ENCODE measurements at regions of chr3 and their contacts with region 1.

Region 1: DNA sequence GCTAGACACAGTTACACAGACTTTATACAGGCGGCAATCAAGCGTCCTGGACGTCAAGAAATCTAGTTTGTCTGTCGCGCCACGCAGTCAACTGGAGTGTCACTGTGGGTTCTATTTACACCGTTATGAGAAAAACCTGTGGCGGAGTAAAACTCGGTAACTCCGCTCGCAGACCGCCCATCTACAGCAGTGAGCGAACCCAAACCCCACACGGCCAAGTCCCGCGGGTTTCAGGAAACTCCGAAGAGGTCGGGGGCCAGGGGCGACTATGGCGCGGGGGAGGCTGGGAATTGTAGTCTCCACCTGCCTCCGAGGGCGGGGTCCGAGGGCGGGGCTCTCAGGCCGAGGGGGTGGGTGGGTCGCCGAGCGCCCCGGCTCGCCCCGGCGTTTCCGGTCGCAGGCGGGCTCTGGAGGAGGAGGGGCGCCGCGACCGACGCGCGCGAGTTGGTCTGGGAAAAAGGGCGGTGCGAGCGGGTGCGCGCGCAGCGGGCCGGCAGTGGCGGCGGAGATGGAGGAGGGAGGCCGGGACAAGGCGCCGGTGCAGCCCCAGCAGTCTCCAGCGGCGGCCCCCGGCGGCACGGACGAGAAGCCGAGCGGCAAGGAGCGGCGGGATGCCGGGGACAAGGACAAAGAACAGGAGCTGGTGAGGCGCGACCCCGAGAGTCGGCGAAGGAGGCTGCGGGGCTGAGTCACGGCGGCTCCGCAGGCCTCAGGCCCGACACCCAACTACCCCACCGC is at the start of gene PSMD2:
- H3K4me3 Mint-ChIP-seq: peak within 1 kb of the TSS; percentile 98
- H3K27ac Mint-ChIP-seq: peak within 1 kb of the TSS; percentile 91
- H3K4me1 Mint-ChIP-seq: peaks cover 31% of the 10 kb centered on the region
- H3K27me3 Mint-ChIP-seq: peaks cover 3% of the 10 kb centered on the region

Region 2: DNA sequence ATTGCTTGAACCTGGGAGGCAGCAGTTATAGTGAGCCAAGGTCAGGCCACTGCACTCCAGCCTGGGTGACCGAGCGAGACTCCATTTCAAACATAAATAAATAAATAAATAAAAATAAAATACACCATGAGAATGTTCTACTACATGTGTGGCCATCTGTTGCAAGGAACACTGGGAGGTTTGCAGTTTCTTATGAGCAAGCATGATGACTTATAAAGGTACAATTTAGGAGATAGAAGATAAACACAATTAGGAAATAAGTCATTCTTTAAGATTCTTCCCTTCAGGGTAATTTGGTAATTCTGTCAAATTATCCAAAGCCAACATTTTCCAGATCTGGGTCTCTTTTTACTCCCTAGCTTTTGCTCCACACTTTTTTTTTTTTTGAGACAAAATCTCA is 232.7 kb before region 1 on chr3:
- intact Hi-C with region 1: no loop called
- H3K4me3 Mint-ChIP-seq: no peak overlapping the region
- H3K27ac Mint-ChIP-seq: no peak overlapping the region
- H3K4me1 Mint-ChIP-seq: no peaks in the 10 kb centered on the region
- H3K27me3 Mint-ChIP-seq: peaks cover 8% of the 10 kb centered on the region

Region 3: GRCh38 chr3:184174646-184175492 is 124.1 kb before region 1 on chr3 and contains the start of gene AP2M1:
- intact Hi-C with region 1: loop called (anchors 1 kb)
- H3K4me3 Mint-ChIP-seq: peak within 1 kb of the TSS; percentile 99
- H3K27ac Mint-ChIP-seq: peak within 1 kb of the TSS; percentile 98
- H3K4me1 Mint-ChIP-seq: peaks cover 54% of the 10 kb centered on the region
- H3K27me3 Mint-ChIP-seq: no peaks in the 10 kb centered on the region

Region 4: DNA sequence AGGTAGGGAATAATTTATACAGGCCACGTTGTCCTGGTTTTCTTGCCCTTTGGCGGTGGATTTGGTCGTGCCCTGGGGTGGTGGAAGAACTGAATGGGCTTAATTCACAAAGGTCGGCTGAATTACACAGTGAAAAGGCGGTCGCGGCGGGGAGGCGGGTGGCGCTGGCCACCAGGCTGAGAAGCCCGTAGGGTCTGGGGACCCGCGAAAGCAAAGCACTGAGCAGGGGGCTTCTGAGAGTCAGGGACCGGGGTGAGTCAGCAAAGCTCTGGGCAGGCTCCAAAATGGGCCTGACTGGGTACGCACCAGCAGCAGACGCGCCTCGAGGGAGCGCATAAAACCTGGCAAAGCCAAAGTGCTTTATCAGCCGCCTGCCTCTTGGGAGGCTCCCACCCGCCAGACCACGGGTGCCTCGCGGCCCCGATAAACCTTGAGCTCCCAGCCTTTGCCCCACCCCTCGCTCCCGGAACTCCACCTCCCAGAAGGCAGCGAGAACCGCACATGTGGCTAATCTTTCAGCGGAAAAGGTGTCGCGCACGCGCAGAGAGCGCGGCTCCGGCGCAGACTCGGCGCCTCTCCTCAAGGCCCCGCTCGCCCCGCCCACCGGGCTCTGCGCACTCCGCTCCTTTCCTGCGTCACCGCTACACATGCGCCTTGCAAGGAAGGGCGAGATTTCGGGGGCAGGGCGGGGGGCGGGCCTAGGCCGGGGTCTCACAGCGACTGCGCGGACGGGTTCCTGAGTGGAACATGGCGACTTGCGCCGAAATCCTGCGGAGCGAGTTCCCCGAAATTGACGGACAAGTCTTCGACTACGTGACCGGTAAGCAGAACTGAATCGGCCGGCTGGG is 113.2 kb before region 1 on chr3 and contains the start of gene ABCF3:
- intact Hi-C with region 1: loop called (anchors 5 kb)
- H3K4me3 Mint-ChIP-seq: peak within 1 kb of the TSS; percentile 96
- H3K27ac Mint-ChIP-seq: peak within 1 kb of the TSS; percentile 94
- H3K4me1 Mint-ChIP-seq: peaks cover 76% of the 10 kb centered on the region
- H3K27me3 Mint-ChIP-seq: no peaks in the 10 kb centered on the region

Region 5: DNA sequence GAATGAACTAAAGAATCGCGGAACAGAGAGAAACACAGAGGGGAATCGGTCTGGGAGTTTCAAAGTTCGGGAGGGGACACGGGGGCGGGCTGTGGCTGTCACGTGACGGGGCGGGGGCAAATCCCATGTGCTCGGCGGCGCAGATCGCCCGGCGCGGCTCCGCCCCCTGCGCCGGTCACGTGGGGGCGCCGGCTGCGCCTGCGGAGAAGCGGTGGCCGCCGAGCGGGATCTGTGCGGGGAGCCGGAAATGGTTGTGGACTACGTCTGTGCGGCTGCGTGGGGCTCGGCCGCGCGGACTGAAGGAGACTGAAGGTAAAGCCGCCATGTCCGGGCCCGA is 15.4 kb after region 1 on chr3 and contains the start of gene EIF4G1:
- intact Hi-C with region 1: loop called (anchors 1 kb)
- H3K4me3 Mint-ChIP-seq: peak within 1 kb of the TSS; percentile 80
- H3K27ac Mint-ChIP-seq: peak within 1 kb of the TSS; percentile 72
- H3K4me1 Mint-ChIP-seq: peaks cover 34% of the 10 kb centered on the region
- H3K27me3 Mint-ChIP-seq: no peaks in the 10 kb centered on the region

Region 6: DNA sequence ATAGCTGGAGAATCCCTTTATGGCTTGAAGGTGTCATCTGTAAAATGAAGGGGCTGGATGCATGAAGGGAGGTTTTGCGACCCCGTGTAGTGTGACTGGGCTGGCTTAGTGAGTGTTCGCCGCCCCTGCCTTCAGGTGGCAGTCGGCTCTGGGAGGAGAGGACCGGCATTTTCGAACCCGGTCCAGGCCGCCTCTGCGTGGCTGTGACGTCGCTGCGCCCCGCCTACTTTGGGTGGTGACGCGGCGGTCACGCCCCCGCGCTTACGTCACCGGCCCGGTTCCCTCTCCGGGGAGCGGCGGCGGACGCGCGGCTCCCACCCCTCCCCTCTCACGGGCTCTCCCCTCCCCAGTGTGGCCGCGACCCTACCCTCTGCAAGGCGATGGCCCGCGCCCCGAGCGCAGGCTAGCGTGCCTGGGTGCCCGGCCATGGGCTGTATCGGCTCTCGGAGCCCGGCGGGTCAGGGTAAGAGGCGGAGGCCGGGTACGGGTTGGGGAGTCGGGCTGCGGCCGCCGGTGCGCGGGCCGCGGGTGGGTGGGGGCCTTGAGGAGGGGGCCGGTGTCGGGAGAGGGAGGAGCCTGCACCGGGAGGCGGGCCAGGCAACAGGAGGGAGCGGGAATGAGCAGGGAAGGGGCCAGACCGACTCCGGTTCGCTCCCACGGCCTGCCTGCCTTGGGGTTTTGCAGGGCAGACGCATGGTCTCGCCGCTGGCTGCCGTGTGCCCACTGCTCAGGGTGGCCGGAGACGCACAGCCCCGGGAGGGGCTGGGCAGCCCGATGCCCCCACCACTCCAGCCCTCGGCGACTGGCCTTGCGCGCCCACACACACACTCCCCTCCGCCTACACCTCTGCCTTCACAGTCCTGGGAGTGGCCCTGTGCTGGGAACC is 37.0 kb after region 1 on chr3:
- intact Hi-C with region 1: no loop called
- H3K4me3 Mint-ChIP-seq: peak overlapping the region; percentile 82
- H3K27ac Mint-ChIP-seq: peak overlapping the region; percentile 90
- H3K4me1 Mint-ChIP-seq: peaks cover 70% of the 10 kb centered on the region
- H3K27me3 Mint-ChIP-seq: no peaks in the 10 kb centered on the region

Region 7: DNA sequence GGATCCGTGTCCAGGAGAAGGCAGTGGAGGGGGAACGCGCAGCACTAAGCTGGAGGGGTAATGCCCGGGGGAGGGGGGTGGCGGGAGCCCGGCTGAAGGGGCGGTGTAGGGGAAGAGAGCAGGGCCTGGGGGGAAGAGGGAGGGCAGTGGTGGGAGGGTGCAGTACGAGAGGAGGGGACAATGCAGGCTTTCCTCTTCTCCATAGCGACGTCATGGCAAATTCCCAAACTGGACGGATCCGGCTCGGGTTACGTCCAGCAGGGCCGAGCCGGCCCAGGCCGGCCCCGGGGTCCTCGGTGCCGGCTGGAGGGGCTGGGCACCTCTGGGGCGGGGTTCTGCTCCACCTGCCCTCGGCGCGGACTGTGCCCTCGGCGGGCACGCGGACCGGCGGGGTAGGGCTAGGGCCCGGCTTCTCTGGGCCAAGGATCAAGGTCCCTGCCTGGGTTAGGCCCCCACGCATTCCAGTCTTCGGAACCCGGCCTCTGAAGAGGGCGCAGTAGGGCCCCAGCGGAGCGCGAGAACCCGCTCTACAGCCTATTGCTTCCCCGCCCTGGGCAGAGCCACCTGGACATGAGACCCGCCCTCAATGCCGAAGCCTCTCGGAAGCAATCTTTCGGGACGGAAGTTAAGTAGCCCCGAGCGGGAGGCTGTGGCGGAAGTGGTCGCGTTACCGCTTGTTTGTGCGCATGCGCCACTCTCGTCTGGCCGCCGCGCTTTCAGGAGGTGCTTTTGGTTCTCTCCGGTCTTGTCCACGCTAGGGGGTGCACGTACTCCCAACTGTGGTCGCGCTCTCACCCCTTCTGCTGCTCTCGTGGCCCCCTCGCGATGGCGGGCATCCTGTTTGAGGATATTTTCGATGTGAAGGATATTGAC is 64.0 kb after region 1 on chr3:
- intact Hi-C with region 1: loop called (anchors 2 kb)
- H3K4me3 Mint-ChIP-seq: peak overlapping the region; percentile 86
- H3K27ac Mint-ChIP-seq: peak overlapping the region; percentile 90
- H3K4me1 Mint-ChIP-seq: peaks cover 42% of the 10 kb centered on the region
- H3K27me3 Mint-ChIP-seq: peaks cover 21% of the 10 kb centered on the region

Measured in dendritic cell treated with granulocyte-macrophage colony-stimulating factor and Interleukin-4, amounts not matched to agents 40 ng/mL and 50 ng/mL, for 4 days (primary cell).